Left ventricle myocardium superior (tissue), 1 donor: ENCODE measurements at regions of chr12 and their contacts with region 1.

Region 1: GRCh38 chr12:6067152-6067916 is 57.1 kb downstream of the VWF start:
- DNase-seq: no peak
- ATAC-seq: peak; percentile 19

Region 2: GRCh38 chr12:6182116-6182898 is 115.0 kb after region 1 on chr12:
- intact Hi-C with region 1: loop called (anchors 10 kb)
- DNase-seq: peak; percentile 54
- ATAC-seq: peak; percentile 73

Region 3: DNA sequence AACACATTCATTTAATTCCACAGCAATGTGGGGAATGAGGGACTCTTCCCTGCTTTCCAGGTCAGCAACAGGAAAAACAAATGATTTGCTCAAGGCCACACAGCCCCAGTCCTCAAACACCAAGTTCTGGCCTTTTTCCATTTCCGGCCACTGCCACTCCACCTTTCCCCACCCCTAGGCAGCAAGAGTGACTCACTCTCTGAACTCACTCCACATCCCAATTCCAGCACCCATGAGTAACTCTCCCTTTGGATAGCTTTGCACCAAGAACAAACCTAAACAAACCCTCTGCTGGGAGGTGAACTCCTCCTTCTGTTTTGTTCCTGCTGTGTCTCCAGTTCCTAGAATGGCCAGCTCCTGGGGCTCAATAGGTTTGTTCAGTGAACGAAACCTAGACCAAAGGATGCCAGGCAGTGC is 212.7 kb after region 1 on chr12:
- intact Hi-C with region 1: loop called (anchors 5 kb)
- DNase-seq: no peak
- ATAC-seq: peak; percentile 3

Region 4: GRCh38 chr12:6735448-6736191 is 668.3 kb after region 1 on chr12:
- intact Hi-C with region 1: no loop called
- DNase-seq: peak; percentile 81
- ATAC-seq: peak; percentile 92